HepG2 (cell line): ENCODE measurements at regions of chr6 and their contacts with region 1.

Region 1: DNA sequence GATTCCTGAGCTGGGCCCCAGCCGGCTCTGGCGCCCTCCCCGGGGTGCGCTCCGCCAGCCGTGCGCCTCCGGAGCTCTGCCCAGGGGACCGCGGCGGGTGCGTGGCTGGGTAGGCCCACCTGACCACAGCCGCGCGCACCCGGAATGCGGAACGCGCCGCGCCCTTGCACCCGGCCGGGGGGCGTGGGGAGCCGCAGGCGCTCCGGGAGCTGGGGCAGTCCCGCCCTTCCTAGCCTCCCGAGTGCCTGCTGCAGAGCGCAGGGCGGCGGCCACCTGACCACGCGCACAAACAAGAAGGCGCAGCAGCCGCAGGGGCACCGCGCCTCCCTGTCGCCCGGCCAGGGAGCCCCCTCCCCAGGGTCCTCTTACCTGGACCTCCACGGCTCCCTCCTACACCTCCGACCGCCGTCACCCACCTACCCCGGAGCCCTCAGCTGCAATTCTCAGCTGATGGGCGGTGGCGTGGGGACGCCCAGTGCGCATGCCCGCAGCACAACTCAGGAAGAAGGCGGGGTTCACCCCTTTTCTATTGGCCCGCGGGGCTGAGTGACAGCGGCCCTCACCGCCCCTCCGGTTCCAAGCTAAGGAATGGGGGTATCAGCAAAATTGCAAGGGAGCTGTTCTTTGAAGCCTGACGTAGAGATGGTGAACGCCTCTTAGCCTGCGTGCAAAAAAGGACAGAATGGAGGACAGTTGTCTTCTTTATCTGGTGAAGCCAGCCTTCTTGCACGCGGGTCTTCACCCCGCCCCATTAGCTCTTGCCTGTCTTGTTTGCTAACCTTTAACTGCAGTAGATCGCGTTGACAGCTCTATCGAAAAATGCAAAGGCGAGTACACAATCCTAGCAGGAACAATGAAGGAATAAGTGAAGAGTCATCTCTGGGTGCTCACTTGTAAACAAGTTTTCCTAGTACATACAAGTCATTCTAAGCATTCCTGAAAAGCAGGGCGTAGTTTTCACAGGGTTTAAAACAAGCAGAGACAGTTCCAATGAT is at the start of gene STX7:
- DNase-seq: peak; percentile 91
- ATAC-seq: peak; percentile 95
- H3K4me3 ChIP-seq: peak within 1 kb of the TSS; percentile 82 to 89 (median 88)
- H3K27ac ChIP-seq: peak within 1 kb of the TSS; percentile 66
- H3K4me1 ChIP-seq: peaks cover 28% of the 10 kb centered on the region
- H3K27me3 ChIP-seq: no peaks in the 10 kb centered on the region
- CTCF ChIP-seq: peak; percentile 32; the same call in 1 of the 2 replicates
- EP300 ChIP-seq: no peak
- POLR2A ChIP-seq: peak; percentile 69 to 89
- RAD21 ChIP-seq: peak; percentile 56; the same call in 1 of the 2 replicates
- total RNA-seq, gene STX7: 34.7 and 40.6 TPM in 2 replicates

Region 2: DNA sequence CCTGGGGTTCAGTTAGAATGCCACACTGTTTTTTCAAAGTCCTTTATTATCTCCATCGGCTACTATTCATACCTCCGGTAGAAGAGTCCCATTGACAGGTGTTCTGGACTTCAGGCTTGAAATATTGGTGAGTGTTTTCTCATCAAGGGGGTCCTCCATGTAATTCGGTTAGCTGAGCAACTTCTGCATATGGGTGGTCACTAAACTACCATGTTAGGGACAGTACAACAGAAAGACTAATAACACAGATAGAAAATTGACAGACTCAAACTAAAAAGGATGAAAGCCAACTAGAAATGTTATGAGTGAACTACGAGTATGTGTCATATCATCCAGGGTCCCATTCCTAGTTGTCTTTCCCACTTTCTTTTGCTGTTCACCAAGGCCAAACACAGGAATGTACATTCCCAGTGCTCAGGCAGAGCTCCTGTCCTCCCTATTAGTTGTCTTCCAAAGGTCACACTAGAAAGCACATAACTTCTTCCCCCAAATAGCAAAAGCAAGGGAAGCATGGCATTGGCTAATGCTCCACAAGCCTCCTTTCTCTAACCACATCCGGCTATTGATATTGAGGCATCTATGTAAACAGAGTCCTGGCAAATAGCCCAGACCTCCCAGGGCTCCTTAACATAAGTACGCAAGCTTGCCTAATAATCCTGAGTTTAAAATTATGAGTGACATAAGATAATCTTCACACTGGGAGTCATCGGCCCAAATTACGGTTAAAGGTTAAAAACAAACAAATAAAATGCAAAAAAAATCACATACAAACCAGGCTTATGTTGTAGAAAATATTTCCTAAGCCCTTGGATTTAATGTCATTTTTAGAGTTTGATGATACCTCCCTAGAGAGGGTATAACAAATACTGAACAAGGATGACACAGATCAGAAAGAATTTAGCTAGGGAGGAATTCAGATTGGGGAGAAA is 575.0 kb before region 1 on chr6:
- CTCF ChIA-PET with region 1: no interaction called
- POLR2A ChIA-PET with region 1: no interaction called
- in situ Hi-C with region 1: no loop called
- intact Hi-C with region 1: loop called (anchors 10 kb)
- DNase-seq: peak; percentile 100
- ATAC-seq: peak; percentile 98
- H3K4me3 ChIP-seq: peak overlapping the region in 1 of 3 experiments; percentile 7; a peak in 1 of 6 replicates
- H3K27ac ChIP-seq: peak overlapping the region; percentile 56
- H3K4me1 ChIP-seq: peaks cover 46% of the 10 kb centered on the region
- H3K27me3 ChIP-seq: no peaks in the 10 kb centered on the region
- CTCF ChIP-seq: no peak
- EP300 ChIP-seq: peak; percentile 40 to 97; a peak in 3 of 4 replicates
- POLR2A ChIP-seq: no peak
- RAD21 ChIP-seq: no peak

Region 3: GRCh38 chr6:132465530-132466485 is 47.1 kb before region 1 on chr6:
- CTCF ChIA-PET with region 1: no interaction called
- POLR2A ChIA-PET with region 1: no interaction called
- in situ Hi-C with region 1: no loop called
- intact Hi-C with region 1: no loop called
- DNase-seq: no peak
- ATAC-seq: no peak
- H3K4me3 ChIP-seq: no peak overlapping the region
- H3K27ac ChIP-seq: no peak overlapping the region
- H3K4me1 ChIP-seq: peaks cover 11% of the 10 kb centered on the region
- H3K27me3 ChIP-seq: no peaks in the 10 kb centered on the region
- CTCF ChIP-seq: no peak
- EP300 ChIP-seq: no peak
- POLR2A ChIP-seq: no peak
- RAD21 ChIP-seq: no peak

Region 4: DNA sequence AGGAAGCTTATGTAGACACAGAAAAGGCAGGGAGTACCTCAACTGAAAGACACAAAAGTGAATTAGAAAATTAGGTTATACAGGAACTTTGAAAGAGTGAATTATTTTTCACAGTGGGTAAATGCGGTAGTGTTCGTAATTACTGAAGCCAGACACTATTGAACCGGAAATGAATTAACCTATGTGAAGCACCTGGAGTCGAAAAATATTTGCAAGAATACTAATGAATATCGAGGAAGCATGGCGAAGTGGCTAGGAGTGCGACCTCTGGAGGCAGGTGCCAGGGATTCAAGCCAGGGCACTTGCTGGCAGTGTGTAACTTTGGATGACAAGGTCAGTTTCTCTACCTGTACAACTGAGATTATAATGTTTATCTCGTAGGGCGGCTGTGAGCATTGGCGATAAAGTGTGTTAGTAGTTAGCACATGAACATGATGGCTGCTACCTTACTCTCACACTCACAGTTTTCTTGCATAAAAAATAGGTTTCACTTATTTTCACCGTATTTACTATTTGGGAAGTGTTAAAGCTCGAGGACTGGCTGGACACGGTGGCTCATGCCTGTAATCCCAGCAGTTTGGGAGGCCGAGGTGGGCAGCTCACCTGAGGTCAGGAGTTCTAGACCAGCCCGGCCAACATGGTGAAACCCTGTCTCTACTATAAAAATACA is 286.1 kb after region 1 on chr6:
- CTCF ChIA-PET with region 1: no interaction called
- POLR2A ChIA-PET with region 1: interaction called, 12 read pairs
- in situ Hi-C with region 1: no loop called
- intact Hi-C with region 1: no loop called
- DNase-seq: peak; percentile 83
- ATAC-seq: no peak
- H3K4me3 ChIP-seq: peak overlapping the region in 2 of 3 experiments; percentile 84 to 89; a peak in 4 of 6 replicates
- H3K27ac ChIP-seq: peak overlapping the region; percentile 45
- H3K4me1 ChIP-seq: 0 out of 2 replicates have a peak, but pooled peaks cover 4% of the 10 kb centered on the region
- H3K27me3 ChIP-seq: no peaks in the 10 kb centered on the region
- CTCF ChIP-seq: peak; percentile 93
- EP300 ChIP-seq: no peak
- POLR2A ChIP-seq: peak in 1 of 2 experiments; percentile 21; a peak in 1 of 4 replicates
- RAD21 ChIP-seq: no peak; the same call in 1 of the 2 replicates

Region 5: GRCh38 chr6:132813173-132813856 is 300.4 kb after region 1 on chr6:
- CTCF ChIA-PET with region 1: no interaction called
- POLR2A ChIA-PET with region 1: interaction called, 23 read pairs
- in situ Hi-C with region 1: no loop called
- intact Hi-C with region 1: loop called (anchors 5 kb)
- DNase-seq: peak; percentile 57
- ATAC-seq: peak; percentile 54
- H3K4me3 ChIP-seq: peak overlapping the region; percentile 59 to 96 (median 66)
- H3K27ac ChIP-seq: peak overlapping the region; percentile 95
- H3K4me1 ChIP-seq: peaks cover 43% of the 10 kb centered on the region
- H3K27me3 ChIP-seq: no peaks in the 10 kb centered on the region; a peak in 2 of 5 replicates
- CTCF ChIP-seq: no peak
- EP300 ChIP-seq: no peak
- POLR2A ChIP-seq: no peak; a peak in 1 of 4 replicates
- RAD21 ChIP-seq: no peak

Region 6: DNA sequence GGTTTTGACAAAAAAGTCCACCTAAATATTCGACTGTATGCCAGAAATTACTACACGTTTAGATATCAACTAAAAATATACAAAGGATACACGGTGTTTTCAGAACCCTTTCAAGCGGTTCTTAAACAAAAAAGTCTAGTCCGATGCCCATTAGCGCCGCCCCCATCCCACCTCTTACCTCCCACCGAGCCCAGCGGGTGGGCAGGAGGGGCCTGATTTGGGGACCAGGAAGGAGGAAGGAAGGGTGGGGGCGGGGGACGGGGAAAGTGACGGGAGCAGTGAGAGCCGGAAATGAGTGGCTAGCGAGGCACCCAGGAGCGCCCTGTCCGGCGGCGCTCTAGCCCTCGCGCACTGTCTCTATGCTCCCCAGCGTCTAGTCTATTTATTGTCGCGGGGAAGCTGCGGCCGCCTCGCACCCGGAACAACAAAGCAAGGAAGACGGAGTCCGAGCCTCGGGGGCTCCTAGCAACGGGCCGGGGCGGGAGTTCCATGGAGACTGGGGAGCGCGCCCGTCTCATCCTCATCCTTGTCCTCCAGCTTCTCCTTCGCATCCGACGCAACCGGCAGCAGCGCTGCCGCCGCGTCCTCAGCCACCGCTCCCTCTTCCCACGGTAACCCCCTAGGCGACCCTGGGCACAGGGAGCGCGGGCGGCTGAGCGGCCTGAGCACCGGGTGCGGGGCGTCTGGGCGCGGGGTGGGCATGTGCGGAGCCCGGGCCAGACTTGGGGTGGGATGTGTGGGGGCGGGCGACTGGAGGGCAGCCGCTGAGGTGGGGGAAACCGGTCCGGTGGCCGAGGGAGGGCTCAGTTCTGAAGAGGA is 1440.1 kb after region 1 on chr6 and contains the start of gene TBPL1:
- CTCF ChIA-PET with region 1: no interaction called
- POLR2A ChIA-PET with region 1: no interaction called
- in situ Hi-C with region 1: no loop called
- intact Hi-C with region 1: loop called (anchors 5 kb)
- DNase-seq: peak; percentile 91
- ATAC-seq: peak; percentile 97
- H3K4me3 ChIP-seq: peak within 1 kb of the TSS; percentile 79 to 89 (median 83)
- H3K27ac ChIP-seq: peak within 1 kb of the TSS; percentile 56
- H3K4me1 ChIP-seq: peaks cover 24% of the 10 kb centered on the region
- H3K27me3 ChIP-seq: no peaks in the 10 kb centered on the region; a peak in 1 of 5 replicates
- CTCF ChIP-seq: peak; percentile 16; the same call in 1 of the 2 replicates
- EP300 ChIP-seq: no peak
- POLR2A ChIP-seq: peak; percentile 86 to 88
- RAD21 ChIP-seq: peak; percentile 22; the same call in 1 of the 2 replicates
- total RNA-seq, gene TBPL1: 39.3 and 47.7 TPM in 2 replicates